ENCODE measurements at regions of chr20 and their contacts with region 1.

Region 1: GRCh38 chr20:38057351-38057972 is 23.9 kb downstream of the RPRD1B start:
- DNase-seq: peak; percentile 90 to 91
- H3K4me3 ChIP-seq: no peak overlapping the region
- H3K27ac ChIP-seq: peak overlapping the region in 2 of 5 donors; percentile 22 to 23
- H3K4me1 ChIP-seq: peaks cover 0 to 49% (median 19%) of the 10 kb centered on the region in 4 donors
- H3K27me3 ChIP-seq: no peaks in the 10 kb centered on the region
- CTCF ChIP-seq: peak in 6 of 7 experiments; percentile 45 to 91 (median 78)
- EP300 ChIP-seq: no peak
- POLR2A ChIP-seq: no peak

Region 2: GRCh38 chr20:37943501-37944455 is 113.7 kb before region 1 on chr20:
- intact Hi-C with region 1: no loop called
- DNase-seq: peak in 1 of 2 donors; percentile 22
- H3K4me3 ChIP-seq: no peak overlapping the region
- H3K27ac ChIP-seq: no peak overlapping the region
- H3K4me1 ChIP-seq: peaks cover 0 to 3% (median 0%) of the 10 kb centered on the region in 4 donors
- H3K27me3 ChIP-seq: peaks cover 0 to 13% (median 0%) of the 10 kb centered on the region in 3 donors
- CTCF ChIP-seq: no peak
- EP300 ChIP-seq: no peak
- POLR2A ChIP-seq: no peak

Region 3: GRCh38 chr20:38221119-38221589 is 163.7 kb after region 1 on chr20:
- intact Hi-C with region 1: loop called (anchors 5 kb)
- DNase-seq: peak; percentile 71 to 88
- H3K4me3 ChIP-seq: no peak overlapping the region
- H3K27ac ChIP-seq: no peak overlapping the region
- H3K4me1 ChIP-seq: peaks cover 0 to 19% (median 13%) of the 10 kb centered on the region in 4 donors
- H3K27me3 ChIP-seq: no peaks in the 10 kb centered on the region
- CTCF ChIP-seq: peak in 5 of 7 experiments; percentile 71 to 87 (median 76)
- EP300 ChIP-seq: no peak
- POLR2A ChIP-seq: no peak